HEK293T (cell line): ENCODE measurements at regions of chr14 and their contacts with region 1.

Region 1: DNA sequence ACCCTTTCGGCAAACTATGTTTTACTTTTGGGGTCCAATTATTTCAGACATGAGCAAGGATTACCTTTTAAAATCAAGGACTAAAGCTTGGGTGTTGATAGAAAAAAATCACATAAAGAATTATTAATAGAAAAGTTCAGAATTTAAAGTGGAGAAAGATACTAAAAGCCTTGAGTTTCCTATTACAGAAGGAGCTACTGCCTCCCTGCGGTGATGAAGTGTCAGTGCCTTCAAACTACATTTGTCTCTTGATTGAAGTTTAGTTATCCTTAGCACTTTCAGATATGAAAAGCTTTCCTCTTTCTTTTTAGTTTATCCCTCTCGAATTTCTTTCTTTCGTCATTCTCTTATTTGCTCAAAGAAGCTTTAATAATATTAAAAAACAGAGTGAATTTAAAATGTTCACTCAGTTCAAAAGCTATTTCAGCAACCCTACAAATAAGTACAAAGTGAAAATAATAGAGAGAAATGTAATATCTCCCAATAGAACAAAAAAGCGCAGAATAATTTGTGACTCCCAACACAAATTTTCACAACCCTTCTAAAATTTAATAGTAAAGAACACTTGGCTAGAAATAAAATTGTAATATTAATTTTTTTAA is 87.6 kb downstream of the SEC23A start:
- DNase-seq: peak; percentile 34

Region 2: DNA sequence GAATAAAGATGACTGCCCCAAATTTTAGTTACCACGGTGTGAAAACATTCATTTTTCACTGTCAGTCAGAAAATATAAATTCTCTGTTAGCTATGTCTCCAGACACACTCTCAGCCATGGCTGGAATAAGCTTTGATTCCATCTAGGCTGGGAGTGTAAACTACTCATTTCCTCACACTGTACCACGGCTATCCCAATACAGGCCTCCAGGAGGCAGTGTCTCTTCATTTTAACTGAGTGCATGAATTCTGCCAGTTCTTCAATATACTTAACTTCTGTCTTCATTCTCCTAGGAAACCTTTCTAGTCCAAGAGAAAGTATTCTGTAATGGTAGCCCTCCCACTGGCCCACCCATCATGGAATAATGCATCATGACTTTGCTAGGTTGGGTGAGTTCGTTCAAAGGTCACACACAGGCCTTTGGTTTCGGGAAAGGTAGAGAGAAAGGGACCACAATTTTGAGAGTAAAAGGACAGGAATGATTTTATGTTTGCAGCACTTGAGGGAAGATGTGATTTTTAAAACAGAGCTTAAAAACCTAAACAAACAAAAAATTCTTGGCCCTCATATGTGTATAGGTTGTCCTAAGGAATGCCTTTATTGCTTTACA is 293.5 kb before region 1 on chr14:
- CTCF ChIA-PET with region 1: interaction called, 10 read pairs
- POLR2A ChIA-PET with region 1: no interaction called
- DNase-seq: peak; percentile 57

Region 3: GRCh38 chr14:38971255-38971921 is 44.1 kb before region 1 on chr14:
- CTCF ChIA-PET with region 1: no interaction called
- POLR2A ChIA-PET with region 1: no interaction called
- DNase-seq: no peak

Region 4: DNA sequence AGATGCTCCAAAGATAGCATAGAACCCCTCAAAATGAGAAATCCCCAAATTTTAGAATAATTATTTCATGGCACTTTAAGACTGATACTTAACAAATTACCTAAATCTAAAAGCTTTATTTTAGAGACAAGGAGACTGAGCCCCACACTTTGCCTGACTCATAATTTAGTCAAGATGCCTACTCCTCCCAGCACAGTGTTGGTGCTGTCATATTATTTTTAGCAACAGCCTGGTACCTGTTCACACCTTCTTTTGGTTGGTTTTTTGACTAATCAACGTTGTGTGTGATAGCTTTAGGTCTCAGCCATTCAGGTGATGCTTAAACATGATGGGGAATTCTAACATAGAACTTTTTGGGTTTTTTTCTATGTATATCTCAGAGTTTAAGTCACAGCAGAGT is 32.6 kb before region 1 on chr14:
- CTCF ChIA-PET with region 1: no interaction called
- POLR2A ChIA-PET with region 1: no interaction called
- DNase-seq: no peak

Region 5: DNA sequence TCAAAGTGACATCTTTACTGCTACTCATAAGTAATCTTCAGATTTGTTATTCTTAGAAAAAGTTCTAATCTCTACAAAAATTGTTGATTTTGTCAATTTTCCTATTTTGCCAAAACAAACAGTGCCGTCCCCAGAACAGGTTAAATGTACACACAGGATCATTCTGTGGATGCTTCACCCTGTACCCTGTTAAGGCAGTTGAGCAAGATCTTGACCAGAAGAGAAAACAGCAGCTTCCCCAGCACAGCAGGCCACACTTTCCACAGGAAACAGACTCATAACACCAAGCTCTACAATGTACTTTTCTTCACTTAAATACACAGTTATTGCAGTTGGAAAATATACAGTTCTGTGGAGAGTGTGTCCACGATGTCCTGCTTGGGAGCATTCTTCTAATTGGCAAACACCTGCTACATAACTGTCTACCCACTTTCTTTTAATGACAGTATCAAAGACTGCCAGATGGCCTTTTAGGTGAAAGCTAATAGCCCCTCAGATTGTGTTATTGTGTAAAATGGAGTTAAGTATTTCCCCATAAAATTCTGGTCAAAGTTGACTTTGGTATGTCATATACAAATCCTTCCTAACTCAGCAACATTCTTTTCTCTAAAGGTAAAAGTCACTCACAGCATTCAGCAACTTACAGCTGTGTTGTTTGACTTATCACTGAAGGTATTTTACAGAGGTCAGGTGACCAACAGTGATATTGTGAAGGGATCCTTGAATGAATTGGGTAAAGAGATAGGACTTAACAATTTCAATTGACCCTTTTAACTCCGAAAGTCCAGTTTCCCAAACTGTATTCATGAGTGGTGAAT is 10.6 kb after region 1 on chr14:
- CTCF ChIA-PET with region 1: interaction called, 19 read pairs
- POLR2A ChIA-PET with region 1: no interaction called
- DNase-seq: no peak

Region 6: DNA sequence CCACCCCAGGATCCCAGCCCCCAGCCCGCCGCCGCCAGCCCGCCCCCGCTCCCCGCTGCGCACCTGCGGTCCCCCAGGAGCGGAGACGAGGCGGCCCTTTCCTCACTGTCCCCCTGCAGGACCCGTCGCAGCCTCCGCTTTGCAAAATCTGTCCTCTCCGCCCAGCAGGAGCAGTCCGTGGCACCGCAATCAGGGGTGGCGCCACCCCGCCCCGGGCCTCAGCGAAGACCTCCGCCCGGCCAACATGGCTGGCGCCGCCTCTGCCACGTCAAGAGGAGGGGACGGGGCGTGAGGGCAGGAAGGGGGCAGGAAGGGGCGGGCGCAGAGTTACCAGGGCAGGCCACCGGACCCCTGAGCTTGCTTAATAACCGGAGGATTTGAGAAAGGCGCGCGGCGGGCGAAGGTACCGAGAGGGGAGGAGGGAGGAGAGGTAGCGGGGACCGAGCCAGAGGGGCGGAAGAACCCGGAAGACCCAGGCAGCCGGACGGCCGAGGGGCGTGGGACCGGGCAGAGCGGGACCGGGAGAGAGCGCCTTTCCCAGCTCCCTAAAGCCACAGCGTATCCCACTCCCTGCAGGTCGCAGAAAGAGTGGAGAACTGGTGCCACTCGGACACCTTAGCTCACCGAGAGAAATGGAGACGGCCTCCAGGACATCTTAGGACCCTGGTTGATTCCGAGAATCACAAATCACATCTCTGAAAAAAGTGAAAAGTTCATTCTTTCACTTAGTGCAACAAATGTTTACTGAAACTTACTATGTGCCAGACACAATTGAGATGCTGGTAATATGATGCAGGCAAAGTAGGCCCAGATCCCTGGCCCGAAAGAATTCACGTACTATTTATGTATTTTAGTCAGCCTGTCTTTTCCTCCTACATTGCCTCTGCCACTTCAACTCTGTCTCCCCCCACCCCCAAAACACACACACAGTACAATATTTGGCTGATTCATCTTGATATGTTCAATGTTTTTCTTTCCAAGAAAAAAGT is 87.8 kb after region 1 on chr14 and contains the start of gene SEC23A:
- CTCF ChIA-PET with region 1: no interaction called
- POLR2A ChIA-PET with region 1: no interaction called
- DNase-seq: peak; percentile 75